Mammary epithelial cell (primary cell): ENCODE measurements at regions of chr16 and their contacts with region 1.

Region 1: DNA sequence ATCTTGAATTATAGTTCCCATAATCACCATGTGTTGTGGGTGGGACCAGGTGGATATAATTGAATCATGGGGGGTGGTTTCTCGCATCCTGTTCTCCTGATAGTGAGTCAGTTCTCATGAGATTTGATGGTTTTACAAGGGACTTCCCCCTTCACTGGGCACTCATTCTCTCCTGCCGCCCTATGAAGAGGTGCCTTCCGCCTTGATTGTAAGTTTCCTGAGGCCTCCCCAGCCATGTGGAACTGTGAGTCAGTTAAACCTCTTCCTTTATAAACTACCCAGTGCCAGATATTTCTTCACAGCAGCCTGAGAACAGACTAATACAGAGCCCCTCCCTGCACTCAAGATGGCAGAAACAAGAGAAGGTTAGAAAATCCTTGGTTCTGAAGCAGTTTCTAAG is 26.4 kb downstream of the LDAF1 start:
- DNase-seq: peak; percentile 63
- H3K4me3 ChIP-seq: no peak overlapping the region
- H3K27ac ChIP-seq: no peak overlapping the region
- H3K4me1 ChIP-seq: peaks cover 17% of the 10 kb centered on the region
- H3K27me3 ChIP-seq: no peaks in the 10 kb centered on the region
- CTCF ChIP-seq: no peak

Region 2: DNA sequence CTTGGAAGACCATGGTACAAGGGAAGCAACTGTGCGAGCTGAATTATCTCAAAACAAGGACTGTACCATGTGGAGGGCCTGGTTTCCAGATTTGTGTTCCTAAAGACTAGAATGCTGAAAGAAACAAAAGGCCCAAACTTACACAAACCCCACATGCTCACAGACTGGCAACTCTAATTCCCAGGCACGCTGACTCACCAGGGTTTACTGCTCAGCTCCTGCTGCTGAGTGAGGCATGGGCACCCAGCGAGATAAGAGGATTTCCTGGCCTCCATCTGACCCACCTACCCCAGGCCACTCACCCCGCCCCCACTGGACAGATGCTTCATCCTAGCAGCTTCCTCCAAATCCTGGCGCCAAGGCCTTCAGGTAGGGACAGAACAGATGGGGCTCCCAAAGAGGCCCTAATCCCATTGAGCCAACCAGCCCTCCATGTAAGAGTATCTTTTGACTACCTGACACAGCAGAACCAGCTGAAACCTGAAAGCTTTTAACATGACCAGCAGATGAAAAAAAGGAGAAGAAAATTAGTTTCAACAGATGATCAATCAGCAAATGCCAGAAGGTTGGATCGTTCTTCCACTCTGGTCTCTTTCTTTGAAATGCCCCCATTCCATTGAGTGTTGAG is 318.6 kb before region 1 on chr16:
- CTCF ChIA-PET with region 1: no interaction called
- dilution Hi-C with region 1: no loop called
- in situ Hi-C with region 1: no loop called
- intact Hi-C with region 1: no loop called
- DNase-seq: peak; percentile 88
- H3K4me3 ChIP-seq: peak overlapping the region in 2 of 3 experiments; percentile 2 to 17
- H3K27ac ChIP-seq: peak overlapping the region; percentile 97
- H3K4me1 ChIP-seq: peaks cover 62% of the 10 kb centered on the region
- H3K27me3 ChIP-seq: no peaks in the 10 kb centered on the region
- CTCF ChIP-seq: no peak

Region 3: GRCh38 chr16:21158208-21159110 is 26.4 kb before region 1 on chr16 and contains the start of gene LDAF1:
- CTCF ChIA-PET with region 1: interaction called, 10 read pairs
- dilution Hi-C with region 1: no loop called
- in situ Hi-C with region 1: no loop called
- intact Hi-C with region 1: loop called (anchors 1 kb)
- DNase-seq: peak; percentile 83
- H3K4me3 ChIP-seq: peak within 1 kb of the TSS; percentile 74 to 76 (median 76)
- H3K27ac ChIP-seq: peak within 1 kb of the TSS; percentile 74
- H3K4me1 ChIP-seq: peaks cover 14% of the 10 kb centered on the region
- H3K27me3 ChIP-seq: no peaks in the 10 kb centered on the region
- CTCF ChIP-seq: no peak
- total RNA-seq, gene LDAF1: 43.5 to 131 TPM

Region 4: DNA sequence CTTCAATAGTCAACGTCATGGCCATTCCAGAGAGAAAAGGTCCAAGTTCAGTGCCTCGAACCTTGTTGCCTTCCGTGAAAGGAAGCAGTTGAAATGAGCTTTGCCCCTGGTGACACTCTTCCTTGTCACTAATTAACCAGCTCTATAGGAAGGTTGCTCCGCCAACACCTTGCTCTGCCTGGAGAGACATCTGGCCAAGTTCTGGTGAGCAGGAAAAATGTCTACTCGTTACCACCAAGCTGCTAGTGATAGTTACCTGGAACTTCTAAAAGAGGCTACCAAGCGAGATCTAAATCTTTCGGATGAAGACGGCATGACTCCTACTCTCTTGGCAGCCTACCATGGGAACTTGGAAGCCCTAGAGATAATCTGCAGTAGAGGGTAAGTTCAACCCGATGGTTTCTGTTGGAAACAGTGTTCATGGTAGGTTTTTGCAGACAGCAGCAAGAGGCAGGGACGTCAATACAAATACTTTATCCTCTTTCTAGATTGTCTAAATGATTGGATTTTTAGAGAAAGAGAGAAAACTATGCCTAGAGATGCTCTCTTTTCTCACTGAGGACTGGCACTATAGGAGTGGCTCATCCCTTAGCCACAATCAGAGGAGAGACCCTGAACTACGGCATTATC is 48.8 kb after region 1 on chr16 and contains the start of gene ANKS4B:
- CTCF ChIA-PET with region 1: no interaction called
- dilution Hi-C with region 1: loop called (anchors 5 kb)
- in situ Hi-C with region 1: no loop called
- intact Hi-C with region 1: no loop called
- DNase-seq: no peak
- H3K4me3 ChIP-seq: no peak within 1 kb of the TSS
- H3K27ac ChIP-seq: no peak within 1 kb of the TSS
- H3K4me1 ChIP-seq: no peaks in the 10 kb centered on the region
- H3K27me3 ChIP-seq: peaks cover 13% of the 10 kb centered on the region
- CTCF ChIP-seq: no peak
- total RNA-seq, gene ANKS4B: not detected

Region 5: GRCh38 chr16:21277927-21278706 is 93.3 kb after region 1 on chr16 and contains the start of gene CRYM:
- CTCF ChIA-PET with region 1: no interaction called
- dilution Hi-C with region 1: loop called (anchors 10 kb)
- in situ Hi-C with region 1: loop called in 1 of 2 experiments (anchors 5 kb)
- intact Hi-C with region 1: loop called (anchors 1 kb)
- DNase-seq: peak; percentile 30
- H3K4me3 ChIP-seq: peak within 1 kb of the TSS; percentile 34 to 51 (median 51)
- H3K27ac ChIP-seq: no peak within 1 kb of the TSS
- H3K4me1 ChIP-seq: peaks cover 5% of the 10 kb centered on the region
- H3K27me3 ChIP-seq: peaks cover 6% of the 10 kb centered on the region
- CTCF ChIP-seq: peak; percentile 41 to 90
- total RNA-seq, gene CRYM: 0.17 to 0.54 TPM

Region 6: GRCh38 chr16:21283521-21284289 is 98.9 kb after region 1 on chr16:
- CTCF ChIA-PET with region 1: no interaction called
- dilution Hi-C with region 1: loop called (anchors 10 kb)
- in situ Hi-C with region 1: loop called in 1 of 2 experiments (anchors 5 kb)
- intact Hi-C with region 1: loop called (anchors 1 kb)
- DNase-seq: peak; percentile 43
- H3K4me3 ChIP-seq: peak overlapping the region; percentile 36 to 59 (median 39)
- H3K27ac ChIP-seq: no peak overlapping the region
- H3K4me1 ChIP-seq: no peaks in the 10 kb centered on the region
- H3K27me3 ChIP-seq: no peaks in the 10 kb centered on the region
- CTCF ChIP-seq: peak in 1 of 2 donors; percentile 50

Region 7: DNA sequence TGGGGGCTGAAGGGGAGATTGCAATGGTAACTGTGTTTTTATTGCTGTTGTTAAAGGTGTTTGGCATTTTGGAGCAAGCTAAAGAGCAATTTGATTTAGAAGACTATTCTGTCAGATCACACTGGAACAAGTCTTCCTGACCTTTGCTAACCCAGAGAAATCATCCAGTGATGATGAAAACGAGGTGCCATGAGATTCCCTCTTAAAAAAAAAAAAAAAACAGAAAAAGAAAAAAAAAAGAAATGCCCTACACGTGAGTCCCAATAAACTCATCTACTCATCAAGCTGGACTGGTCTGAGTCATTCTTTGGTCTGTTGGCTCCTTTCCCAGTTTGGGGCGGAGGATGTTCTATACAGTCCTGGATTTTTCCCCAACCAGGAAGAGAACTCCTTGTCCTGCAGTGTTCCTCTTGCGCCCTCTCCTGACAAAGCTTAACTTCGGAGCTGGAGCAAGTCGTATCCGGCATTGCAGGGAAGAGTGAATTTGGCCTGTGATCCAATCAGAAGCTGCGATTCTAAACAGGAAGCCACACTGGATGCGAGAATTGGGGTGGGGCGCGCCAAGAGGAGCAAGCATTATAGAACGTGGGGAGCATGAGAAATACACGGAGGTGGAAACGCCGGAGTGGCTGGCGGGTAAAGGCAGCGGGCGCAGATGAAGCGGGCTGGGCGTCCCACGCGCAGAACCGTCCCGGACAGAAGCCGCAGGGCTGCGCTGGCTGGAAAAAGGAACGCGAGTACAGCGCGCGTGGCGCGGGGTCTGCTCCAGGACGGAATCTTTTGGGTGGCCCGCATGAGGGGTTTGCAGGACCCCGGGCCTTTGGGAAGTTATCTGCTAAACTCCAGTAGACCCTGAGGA is 115.7 kb after region 1 on chr16:
- CTCF ChIA-PET with region 1: interaction called, 53 read pairs
- dilution Hi-C with region 1: loop called (anchors 5 kb)
- in situ Hi-C with region 1: no loop called
- intact Hi-C with region 1: loop called (anchors 1 kb)
- DNase-seq: peak; percentile 100
- H3K4me3 ChIP-seq: peak overlapping the region; percentile 57 to 82 (median 68)
- H3K27ac ChIP-seq: peak overlapping the region; percentile 98
- H3K4me1 ChIP-seq: peaks cover 13% of the 10 kb centered on the region
- H3K27me3 ChIP-seq: no peaks in the 10 kb centered on the region
- CTCF ChIP-seq: peak; percentile 85 to 93

Region 8: GRCh38 chr16:22659933-22660332 is 1475.1 kb after region 1 on chr16:
- CTCF ChIA-PET with region 1: no interaction called
- dilution Hi-C with region 1: loop called (anchors 10 kb)
- in situ Hi-C with region 1: no loop called
- intact Hi-C with region 1: no loop called
- DNase-seq: no peak
- H3K4me3 ChIP-seq: no peak overlapping the region
- H3K27ac ChIP-seq: no peak overlapping the region
- H3K4me1 ChIP-seq: peaks cover 10% of the 10 kb centered on the region
- H3K27me3 ChIP-seq: no peaks in the 10 kb centered on the region
- CTCF ChIP-seq: no peak